ENCODE measurements at regions of chr12 and their contacts with region 1.

Region 1: DNA sequence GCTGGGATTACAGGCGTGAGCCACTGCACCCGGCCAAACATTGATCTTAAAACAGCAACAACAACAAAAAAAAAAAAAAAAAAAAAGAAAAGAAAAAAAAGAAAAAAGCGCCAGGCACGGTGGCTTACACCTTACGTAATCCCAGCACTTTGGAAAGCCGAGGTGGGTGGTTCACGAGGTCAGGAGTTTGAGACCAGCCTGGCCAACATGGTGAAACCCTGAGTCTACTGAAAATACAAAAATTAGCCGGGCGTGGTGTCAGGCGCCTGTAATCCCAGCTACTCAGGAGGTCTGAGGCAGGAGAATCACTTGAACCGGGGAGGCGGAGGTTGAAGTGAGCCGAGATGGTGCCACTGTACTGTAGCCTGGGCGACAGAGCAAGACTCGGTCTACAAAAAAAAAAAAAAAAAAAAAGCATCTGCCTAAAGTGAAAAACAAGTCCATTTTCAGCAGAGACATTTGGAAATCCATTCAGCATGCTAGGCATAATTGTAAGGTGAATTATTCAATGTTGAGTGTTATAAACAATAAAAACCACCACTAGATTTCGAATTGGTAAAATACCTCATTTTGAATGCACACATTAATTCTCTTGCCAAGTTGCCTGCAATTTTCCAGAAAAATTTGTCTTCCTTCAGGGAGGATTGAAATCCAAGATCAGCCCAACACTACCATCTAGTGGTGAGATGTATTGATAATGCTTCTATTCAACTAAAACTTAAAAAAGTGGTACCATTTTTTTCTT is 8.0 kb upstream of the CERS5 start:
- DNase-seq: peak; percentile 58
- ATAC-seq: peak; percentile 63; the same call in 1 of the 2 replicates
- H3K4me3 ChIP-seq: no peak overlapping the region
- H3K27ac ChIP-seq: no peak overlapping the region
- H3K4me1 ChIP-seq: peaks cover under 1 to 4% of the 10 kb centered on the region in 2 experiments; a peak in 3 of 4 replicates
- H3K27me3 ChIP-seq: no peaks in the 10 kb centered on the region
- CTCF ChIP-seq: peak; percentile 39 to 79 (median 59); a peak in 5 of 6 replicates
- POLR2A ChIP-seq: no peak
- RAD21 ChIP-seq: peak; percentile 84

Region 2: DNA sequence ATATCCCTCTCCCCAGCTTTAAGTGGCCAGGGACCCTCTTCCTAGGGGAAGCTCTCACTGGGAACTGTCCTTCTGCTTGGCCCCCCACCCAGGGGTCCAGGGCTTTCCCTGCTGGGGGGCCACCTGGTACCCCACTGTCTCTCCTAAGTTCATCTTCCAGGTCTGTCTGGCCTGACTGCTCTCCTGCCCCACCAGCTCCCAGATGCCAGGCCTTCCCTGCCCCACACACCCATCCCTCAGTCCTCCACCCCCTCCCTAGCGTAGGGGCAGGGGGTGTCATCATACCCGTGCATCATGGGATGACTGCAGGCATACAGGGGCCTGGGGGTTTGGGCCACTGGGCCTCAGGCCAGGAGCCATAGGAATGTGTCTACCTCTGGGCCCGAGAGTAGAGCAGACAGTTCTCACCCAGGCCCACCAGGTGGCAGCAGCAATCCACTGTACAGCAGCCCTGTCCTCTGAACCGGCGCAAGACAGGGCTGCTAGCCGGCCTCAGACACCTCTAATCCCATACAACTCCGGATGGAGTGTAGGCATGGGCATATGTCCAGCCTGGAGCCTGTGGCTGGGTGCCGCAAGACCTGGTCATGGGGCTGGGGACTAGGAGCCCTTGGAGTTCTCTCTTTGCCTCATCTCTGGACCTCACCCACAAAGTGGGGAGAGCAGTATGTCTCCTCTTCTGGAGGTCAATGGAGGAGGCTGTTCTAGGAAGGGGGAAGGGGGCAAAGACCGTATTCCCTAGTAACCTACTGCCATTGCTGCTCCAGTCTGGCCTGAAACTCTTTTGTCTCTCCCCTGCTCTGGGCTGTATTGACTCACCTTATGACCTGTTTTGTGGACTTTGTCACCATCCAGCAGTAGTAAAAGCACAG is 100.0 kb before region 1 on chr12:
- CTCF ChIA-PET with region 1: interaction called, 12 read pairs
- POLR2A ChIA-PET with region 1: no interaction called
- RAD21 ChIA-PET with region 1: interaction called in 1 of 2 experiments, 4 read pairs
- intact Hi-C with region 1: loop called (anchors 1 kb)
- DNase-seq: peak; percentile 42
- ATAC-seq: peak; percentile 95
- H3K4me3 ChIP-seq: no peak overlapping the region
- H3K27ac ChIP-seq: no peak overlapping the region
- H3K4me1 ChIP-seq: peaks cover 0 to 14% of the 10 kb centered on the region in 2 experiments; a peak in 1 of 4 replicates
- H3K27me3 ChIP-seq: no peaks in the 10 kb centered on the region
- CTCF ChIP-seq: peak; percentile 81 to 93 (median 91)
- POLR2A ChIP-seq: no peak
- RAD21 ChIP-seq: peak; percentile 97

Region 3: DNA sequence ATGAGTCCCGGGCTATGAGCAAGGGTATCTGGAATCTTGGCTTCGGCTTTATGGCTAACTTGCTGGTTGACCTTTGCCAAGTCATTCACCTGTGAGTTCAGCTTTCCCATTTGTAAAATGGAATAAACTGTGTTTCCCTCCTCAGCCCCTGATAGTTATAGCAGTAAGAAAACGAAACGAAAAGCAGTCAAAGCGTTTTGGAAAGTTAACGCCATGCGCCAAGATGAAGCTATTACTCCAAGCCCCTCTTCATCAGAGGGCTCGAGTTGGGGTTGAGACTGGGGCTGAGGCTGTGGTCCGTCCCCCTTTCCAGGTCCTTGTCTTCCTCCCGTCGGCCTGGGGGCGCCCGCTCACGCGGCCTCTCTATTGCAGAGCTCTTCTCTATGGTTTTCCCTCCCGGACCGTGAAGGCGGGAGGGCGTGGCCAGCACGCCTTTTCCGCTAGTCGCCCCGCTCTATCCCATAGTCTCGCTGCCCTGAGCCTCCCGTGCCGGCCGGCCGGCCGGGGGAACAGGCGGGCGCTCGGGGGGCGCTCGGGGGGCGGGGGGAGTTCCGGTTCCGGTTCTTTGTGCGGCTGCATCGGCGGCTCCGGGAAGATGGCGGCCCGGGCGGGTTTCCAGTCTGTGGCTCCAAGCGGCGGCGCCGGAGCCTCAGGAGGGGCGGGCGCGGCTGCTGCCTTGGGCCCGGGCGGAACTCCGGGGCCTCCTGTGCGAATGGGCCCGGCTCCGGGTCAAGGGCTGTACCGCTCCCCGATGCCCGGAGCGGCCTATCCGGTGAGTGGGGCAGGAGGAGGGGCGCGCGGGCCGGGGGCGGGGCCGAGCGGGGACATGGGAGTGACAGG is 90.1 kb before region 1 on chr12 and contains the start of gene SMARCD1:
- CTCF ChIA-PET with region 1: interaction called, 12 read pairs
- POLR2A ChIA-PET with region 1: interaction called, 3 read pairs
- RAD21 ChIA-PET with region 1: no interaction called
- intact Hi-C with region 1: no loop called
- DNase-seq: peak; percentile 81
- ATAC-seq: peak; percentile 89
- H3K4me3 ChIP-seq: peak within 1 kb of the TSS; percentile 70 to 77
- H3K27ac ChIP-seq: peak within 1 kb of the TSS; percentile 59
- H3K4me1 ChIP-seq: peaks cover 5 to 21% of the 10 kb centered on the region in 2 experiments
- H3K27me3 ChIP-seq: no peaks in the 10 kb centered on the region
- CTCF ChIP-seq: peak; percentile 45 to 60 (median 56); a peak in 4 of 6 replicates
- POLR2A ChIP-seq: peak; percentile 50
- RAD21 ChIP-seq: no peak
- total RNA-seq, gene SMARCD1: 64.8 TPM

Region 4: DNA sequence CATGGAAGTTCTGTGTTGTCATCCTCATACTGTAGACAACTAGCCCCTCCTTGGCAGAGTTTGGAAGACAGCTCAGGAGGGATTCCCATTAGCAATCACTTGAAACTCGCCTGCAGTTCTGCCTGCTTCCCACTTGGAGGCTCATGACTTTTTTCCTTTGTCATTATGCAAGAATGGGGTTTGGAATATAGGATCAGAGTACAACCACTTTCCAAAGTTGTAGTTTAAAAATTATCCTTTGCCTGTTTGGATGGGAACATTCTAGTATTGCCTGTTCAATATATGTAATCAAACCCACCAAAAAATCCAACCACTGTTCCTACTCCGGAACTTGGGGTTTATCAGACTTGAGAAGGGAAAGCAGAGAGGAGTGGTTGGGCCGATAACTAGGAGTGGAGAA is 73.5 kb before region 1 on chr12:
- CTCF ChIA-PET with region 1: interaction called, 11 read pairs
- POLR2A ChIA-PET with region 1: no interaction called
- RAD21 ChIA-PET with region 1: interaction called in 1 of 2 experiments, 3 read pairs
- intact Hi-C with region 1: no loop called
- DNase-seq: peak; percentile 27
- ATAC-seq: peak; percentile 48
- H3K4me3 ChIP-seq: no peak overlapping the region
- H3K27ac ChIP-seq: no peak overlapping the region
- H3K4me1 ChIP-seq: peaks cover 10 to 13% of the 10 kb centered on the region in 2 experiments
- H3K27me3 ChIP-seq: no peaks in the 10 kb centered on the region
- CTCF ChIP-seq: peak; percentile 46 to 60 (median 53); a peak in 5 of 6 replicates
- POLR2A ChIP-seq: no peak
- RAD21 ChIP-seq: peak; percentile 48

Region 5: DNA sequence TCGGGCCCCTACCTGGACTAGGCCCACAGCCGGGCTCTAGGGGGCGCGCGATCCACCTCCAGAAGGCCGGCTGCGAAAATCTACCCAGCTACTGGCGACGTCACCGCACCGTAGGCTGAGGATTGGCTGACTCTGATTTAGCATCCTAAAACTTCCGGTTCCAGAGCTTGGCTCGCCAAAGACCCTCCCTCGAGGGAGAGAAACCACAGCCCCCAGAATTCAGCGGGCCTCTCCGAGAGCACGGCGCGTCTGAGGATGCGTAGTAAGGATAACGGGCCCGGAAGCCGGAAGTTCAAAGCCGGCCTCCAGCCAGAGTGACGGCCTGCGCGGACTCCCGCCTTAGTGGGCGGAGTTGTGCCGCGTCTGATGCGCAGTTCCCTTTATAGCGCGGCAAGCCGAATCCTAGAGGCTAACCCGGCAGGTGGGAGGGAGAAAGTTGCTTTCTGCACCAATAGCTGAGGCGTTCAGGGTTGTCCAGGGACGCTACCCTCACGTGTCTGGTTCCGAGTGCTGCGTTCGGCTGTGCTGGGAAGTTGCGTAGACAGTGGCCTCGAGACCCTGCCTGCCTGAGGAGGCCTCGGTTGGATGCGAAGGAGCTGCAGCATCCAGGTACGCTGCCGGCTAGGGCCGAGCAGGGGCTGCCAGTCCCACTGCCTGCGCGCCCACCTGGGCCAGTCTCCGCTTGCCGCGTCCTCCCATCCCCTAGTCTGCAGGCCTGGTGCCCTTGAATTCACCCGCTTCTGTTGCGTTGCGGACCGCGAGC is 63.3 kb before region 1 on chr12 and contains the start of gene COX14:
- CTCF ChIA-PET with region 1: interaction called, 29 read pairs
- POLR2A ChIA-PET with region 1: interaction called, 3 read pairs
- RAD21 ChIA-PET with region 1: interaction called in 1 of 2 experiments, 3 read pairs
- intact Hi-C with region 1: no loop called
- DNase-seq: peak; percentile 99
- ATAC-seq: peak; percentile 90
- H3K4me3 ChIP-seq: peak within 1 kb of the TSS; percentile 93 to 99
- H3K27ac ChIP-seq: peak within 1 kb of the TSS; percentile 77
- H3K4me1 ChIP-seq: peaks cover 20 to 22% of the 10 kb centered on the region in 2 experiments
- H3K27me3 ChIP-seq: no peaks in the 10 kb centered on the region
- CTCF ChIP-seq: peak; percentile 83 to 94 (median 91); a peak in 5 of 6 replicates
- POLR2A ChIP-seq: peak; percentile 78
- RAD21 ChIP-seq: peak; percentile 70
- total RNA-seq, gene COX14: 41.0 TPM

Measured in HCT116 (cell line).